GM23248 (cell line): ENCODE measurements at regions of chr19 and their contacts with region 1.

Region 1: GRCh38 chr19:984165-984967 is at the start of gene WDR18:
- DNase-seq: peak; percentile 98
- H3K4me3 ChIP-seq: peak within 1 kb of the TSS; percentile 86
- H3K27ac ChIP-seq: peak within 1 kb of the TSS; percentile 81
- H3K4me1 ChIP-seq: peaks cover 11% of the 10 kb centered on the region; the same call in 1 of the 2 replicates
- H3K27me3 ChIP-seq: no peaks in the 10 kb centered on the region
- total RNA-seq, gene WDR18: 63.5 and 83.4 TPM in 2 replicates

Region 2: GRCh38 chr19:771332-771785 is 213.0 kb before region 1 on chr19:
- in situ Hi-C with region 1: loop called (anchors 10 kb)
- DNase-seq: peak; percentile 83
- H3K4me3 ChIP-seq: no peak overlapping the region
- H3K27ac ChIP-seq: no peak overlapping the region
- H3K4me1 ChIP-seq: 0 out of 2 replicates have a peak, but pooled peaks cover 5% of the 10 kb centered on the region
- H3K27me3 ChIP-seq: no peaks in the 10 kb centered on the region

Region 3: GRCh38 chr19:835210-835810 is 149.1 kb before region 1 on chr19:
- in situ Hi-C with region 1: no loop called
- DNase-seq: no peak
- H3K4me3 ChIP-seq: no peak overlapping the region
- H3K27ac ChIP-seq: no peak overlapping the region
- H3K4me1 ChIP-seq: no peaks in the 10 kb centered on the region
- H3K27me3 ChIP-seq: peaks cover 12% of the 10 kb centered on the region; the same call in 1 of the 2 replicates

Region 4: DNA sequence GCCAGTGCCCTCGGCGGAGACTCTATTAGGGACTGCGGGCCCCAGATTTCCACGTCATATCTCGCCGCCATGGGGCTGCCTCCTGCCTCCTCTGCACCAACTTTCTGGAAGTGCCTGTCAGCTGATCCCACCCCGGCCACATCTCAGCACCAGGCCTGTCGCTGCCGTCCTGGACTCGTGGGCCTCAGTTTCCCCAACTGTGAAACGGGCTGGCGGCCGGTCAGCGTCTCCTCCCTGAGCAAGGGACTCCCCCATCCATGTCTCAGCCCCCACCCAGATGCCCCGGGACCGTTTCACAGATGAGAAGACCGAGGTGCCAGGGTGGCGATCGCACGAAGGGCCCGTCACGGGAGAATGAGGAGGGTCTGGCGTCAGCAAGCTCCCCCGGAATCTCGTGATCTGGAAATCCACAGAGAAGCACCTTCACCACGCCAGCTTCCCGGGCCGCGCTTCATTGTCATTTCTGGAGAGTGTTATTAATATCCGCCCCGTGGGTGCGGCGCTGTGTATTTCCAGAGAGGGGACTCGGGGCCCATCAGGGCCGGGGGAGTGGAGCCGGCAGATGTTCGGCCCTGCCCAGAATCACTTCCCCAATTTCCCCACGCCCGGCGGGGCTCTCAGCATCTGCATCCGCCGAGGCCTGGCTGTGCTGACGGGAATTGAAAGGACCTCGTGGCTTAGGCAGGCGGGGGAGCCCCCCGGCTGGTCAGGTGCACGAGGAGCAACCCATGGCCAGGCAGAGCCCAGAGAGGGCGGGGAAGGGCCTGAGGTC is 36.9 kb before region 1 on chr19:
- in situ Hi-C with region 1: no loop called
- DNase-seq: no peak
- H3K4me3 ChIP-seq: no peak overlapping the region
- H3K27ac ChIP-seq: no peak overlapping the region
- H3K4me1 ChIP-seq: peaks cover 8% of the 10 kb centered on the region; the same call in 1 of the 2 replicates
- H3K27me3 ChIP-seq: no peaks in the 10 kb centered on the region